ENCODE measurements at regions of chr7 and their contacts with region 1.

Region 1: GRCh38 chr7:87312215-87312865 is 33.1 kb upstream of the CROT start:
- DNase-seq: peak; percentile 75
- H3K4me3 ChIP-seq: no peak overlapping the region
- H3K27ac ChIP-seq: no peak overlapping the region
- H3K4me1 ChIP-seq: peaks cover 3% of the 10 kb centered on the region
- H3K27me3 ChIP-seq: no peaks in the 10 kb centered on the region
- CTCF ChIP-seq: peak; percentile 92 to 93
- POLR2A ChIP-seq: no peak

Region 2: DNA sequence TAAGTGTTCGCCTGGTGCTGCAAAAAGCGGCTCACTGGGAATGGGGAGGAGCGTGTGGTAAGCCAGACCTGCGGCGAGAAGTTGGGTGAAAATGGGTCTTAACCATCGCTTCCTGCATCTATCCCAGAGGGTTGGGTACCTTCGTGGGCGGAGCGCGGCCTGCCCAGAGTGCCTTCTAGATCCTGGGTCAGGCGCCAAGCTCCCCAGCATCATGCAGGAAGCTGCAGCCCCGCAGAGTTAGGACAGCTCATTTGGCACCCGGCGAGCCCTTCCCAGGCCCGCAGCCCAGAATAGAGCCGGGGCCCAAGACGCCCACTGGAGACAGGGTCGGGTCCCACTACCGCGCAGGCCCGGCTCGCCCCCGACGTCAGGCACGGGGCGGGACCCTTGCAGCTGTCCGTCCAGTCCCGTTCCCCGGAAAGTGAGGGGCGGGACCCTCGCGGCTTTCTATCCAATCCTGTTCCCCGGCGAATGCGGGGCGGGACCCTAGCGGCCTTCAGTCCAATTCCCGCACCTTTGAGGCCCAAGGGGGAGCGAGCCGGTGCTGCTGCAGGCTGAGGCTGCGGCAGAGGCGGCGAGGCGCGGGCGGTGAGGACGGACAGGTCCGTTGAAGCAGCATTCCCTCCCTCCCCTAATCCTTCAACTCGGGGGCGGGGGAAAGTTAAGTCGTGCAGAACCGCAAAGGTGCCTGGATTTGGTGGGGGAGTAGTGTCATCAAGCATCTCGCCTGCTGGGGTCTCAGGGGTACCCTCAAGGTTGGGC is 33.0 kb after region 1 on chr7 and contains the start of gene CROT:
- CTCF ChIA-PET with region 1: interaction called, 3 read pairs
- POLR2A ChIA-PET with region 1: no interaction called
- dilution Hi-C with region 1: no loop called
- intact Hi-C with region 1: loop called (anchors 1 kb)
- DNase-seq: peak; percentile 97
- H3K4me3 ChIP-seq: peak within 1 kb of the TSS; percentile 49 to 75 (median 67)
- H3K27ac ChIP-seq: peak within 1 kb of the TSS; percentile 4
- H3K4me1 ChIP-seq: peaks cover 6% of the 10 kb centered on the region
- H3K27me3 ChIP-seq: no peaks in the 10 kb centered on the region
- CTCF ChIP-seq: peak in 1 of 2 donors; percentile 10
- POLR2A ChIP-seq: peak; percentile 83
- total RNA-seq, gene CROT: 5.7 and 6.6 TPM in 2 replicates

Region 3: DNA sequence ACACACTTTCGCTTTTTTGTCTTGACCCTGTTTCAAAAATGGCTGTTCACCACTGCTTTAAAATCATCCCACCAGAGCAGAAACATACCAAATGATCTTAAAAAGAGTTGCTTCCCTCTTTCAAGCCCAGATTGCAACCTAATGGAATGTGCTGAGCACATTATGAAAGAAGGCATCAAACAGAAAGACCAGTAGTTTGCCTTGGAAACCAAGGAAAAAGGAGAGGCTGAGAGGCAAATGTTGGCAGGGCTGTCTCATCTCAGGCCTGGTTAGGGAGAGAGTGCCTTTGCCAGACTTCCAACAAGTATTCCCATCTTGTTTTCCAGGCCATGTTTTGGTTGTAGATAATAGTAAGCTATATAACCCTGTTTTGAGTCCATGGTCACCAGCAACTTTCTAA is 98.8 kb after region 1 on chr7:
- CTCF ChIA-PET with region 1: interaction called, 299 read pairs
- POLR2A ChIA-PET with region 1: no interaction called
- dilution Hi-C with region 1: loop called (anchors 25 kb)
- intact Hi-C with region 1: loop called (anchors 1 kb)
- DNase-seq: no peak
- H3K4me3 ChIP-seq: no peak overlapping the region
- H3K27ac ChIP-seq: no peak overlapping the region
- H3K4me1 ChIP-seq: no peaks in the 10 kb centered on the region
- H3K27me3 ChIP-seq: peaks cover 14% of the 10 kb centered on the region in 2 experiments
- CTCF ChIP-seq: no peak
- POLR2A ChIP-seq: no peak

Region 4: DNA sequence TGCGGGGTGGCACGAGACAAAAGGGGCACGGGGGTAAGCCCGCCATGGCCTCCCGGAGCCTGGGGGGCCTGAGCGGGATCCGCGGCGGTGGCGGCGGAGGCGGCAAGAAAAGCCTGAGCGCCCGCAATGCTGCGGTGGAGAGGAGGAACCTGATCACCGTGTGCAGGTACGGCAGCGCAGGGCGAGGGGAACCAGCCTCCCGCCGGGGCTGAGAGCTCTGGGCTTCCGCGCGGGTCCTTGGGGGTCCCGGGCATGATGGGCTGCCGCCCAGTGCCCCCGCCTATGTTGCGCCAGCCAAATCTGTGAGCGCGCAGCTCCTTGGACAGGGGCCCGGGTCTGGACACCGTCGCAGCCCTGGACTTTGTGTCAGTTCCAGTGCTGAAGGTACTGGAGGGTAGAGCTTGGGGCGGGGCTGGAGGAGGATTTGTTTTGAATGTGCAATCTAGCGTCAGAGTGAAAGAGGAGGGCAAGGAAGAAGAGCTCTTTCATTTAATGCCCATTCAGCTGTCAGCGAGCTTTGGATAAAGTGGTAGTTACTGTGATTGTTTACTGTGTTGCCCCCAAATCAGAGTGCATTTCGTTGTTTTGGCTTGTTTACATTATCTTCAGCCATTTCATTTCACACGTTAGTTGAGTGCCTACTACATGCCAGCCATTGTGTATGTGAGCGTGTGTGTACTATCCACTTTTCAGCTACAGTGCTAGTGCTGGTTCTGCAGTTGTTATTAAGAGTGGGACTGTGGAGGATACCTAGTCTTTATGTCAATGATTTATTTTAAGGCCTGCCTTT is 316.6 kb after region 1 on chr7:
- CTCF ChIA-PET with region 1: no interaction called
- POLR2A ChIA-PET with region 1: no interaction called
- dilution Hi-C with region 1: no loop called
- intact Hi-C with region 1: loop called (anchors 5 kb)
- DNase-seq: peak; percentile 13
- H3K4me3 ChIP-seq: peak overlapping the region; percentile 44 to 53 (median 49)
- H3K27ac ChIP-seq: no peak overlapping the region
- H3K4me1 ChIP-seq: peaks cover 4% of the 10 kb centered on the region
- H3K27me3 ChIP-seq: peaks cover 0 to 2% of the 10 kb centered on the region in 2 experiments
- CTCF ChIP-seq: no peak
- POLR2A ChIP-seq: no peak

Region 5: GRCh38 chr7:87645446-87645845 is 333.1 kb after region 1 on chr7:
- CTCF ChIA-PET with region 1: no interaction called
- POLR2A ChIA-PET with region 1: no interaction called
- dilution Hi-C with region 1: no loop called
- intact Hi-C with region 1: no loop called
- DNase-seq: peak; percentile 30
- H3K4me3 ChIP-seq: no peak overlapping the region
- H3K27ac ChIP-seq: peak overlapping the region; percentile 45
- H3K4me1 ChIP-seq: peaks cover 22% of the 10 kb centered on the region
- H3K27me3 ChIP-seq: no peaks in the 10 kb centered on the region
- CTCF ChIP-seq: no peak
- POLR2A ChIP-seq: no peak

Region 6: DNA sequence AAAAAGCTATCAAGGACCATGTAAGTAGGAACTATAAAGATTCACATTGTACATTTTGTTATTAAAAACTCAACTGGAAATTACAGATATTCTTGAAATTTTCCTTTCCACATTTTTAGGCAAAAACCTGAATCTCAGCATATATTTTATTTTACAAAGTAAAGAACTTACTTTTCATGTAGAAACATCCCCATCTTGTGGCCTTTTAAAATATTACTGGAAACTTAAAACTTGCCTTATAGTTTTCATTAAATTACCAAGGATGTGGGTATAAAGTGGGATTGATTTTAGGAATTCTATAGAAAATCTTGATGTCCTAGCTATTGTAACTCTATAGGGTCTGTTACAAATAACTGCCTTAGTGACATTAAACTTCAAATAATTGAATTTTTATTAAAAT is 574.5 kb after region 1 on chr7:
- CTCF ChIA-PET with region 1: interaction called, 4 read pairs
- POLR2A ChIA-PET with region 1: no interaction called
- dilution Hi-C with region 1: no loop called
- intact Hi-C with region 1: loop called (anchors 1 kb)
- DNase-seq: peak; percentile 56
- H3K4me3 ChIP-seq: no peak overlapping the region
- H3K27ac ChIP-seq: no peak overlapping the region
- H3K4me1 ChIP-seq: no peaks in the 10 kb centered on the region
- H3K27me3 ChIP-seq: no peaks in the 10 kb centered on the region
- CTCF ChIP-seq: peak; percentile 3 to 9
- POLR2A ChIP-seq: no peak

Region 7: GRCh38 chr7:88111136-88111743 is 798.9 kb after region 1 on chr7:
- CTCF ChIA-PET with region 1: interaction called, 3 read pairs
- POLR2A ChIA-PET with region 1: no interaction called
- dilution Hi-C with region 1: no loop called
- intact Hi-C with region 1: loop called (anchors 1 kb)
- DNase-seq: peak; percentile 65
- H3K4me3 ChIP-seq: no peak overlapping the region
- H3K27ac ChIP-seq: no peak overlapping the region
- H3K4me1 ChIP-seq: no peaks in the 10 kb centered on the region
- H3K27me3 ChIP-seq: no peaks in the 10 kb centered on the region
- CTCF ChIP-seq: peak; percentile 32 to 36
- POLR2A ChIP-seq: no peak

Region 8: DNA sequence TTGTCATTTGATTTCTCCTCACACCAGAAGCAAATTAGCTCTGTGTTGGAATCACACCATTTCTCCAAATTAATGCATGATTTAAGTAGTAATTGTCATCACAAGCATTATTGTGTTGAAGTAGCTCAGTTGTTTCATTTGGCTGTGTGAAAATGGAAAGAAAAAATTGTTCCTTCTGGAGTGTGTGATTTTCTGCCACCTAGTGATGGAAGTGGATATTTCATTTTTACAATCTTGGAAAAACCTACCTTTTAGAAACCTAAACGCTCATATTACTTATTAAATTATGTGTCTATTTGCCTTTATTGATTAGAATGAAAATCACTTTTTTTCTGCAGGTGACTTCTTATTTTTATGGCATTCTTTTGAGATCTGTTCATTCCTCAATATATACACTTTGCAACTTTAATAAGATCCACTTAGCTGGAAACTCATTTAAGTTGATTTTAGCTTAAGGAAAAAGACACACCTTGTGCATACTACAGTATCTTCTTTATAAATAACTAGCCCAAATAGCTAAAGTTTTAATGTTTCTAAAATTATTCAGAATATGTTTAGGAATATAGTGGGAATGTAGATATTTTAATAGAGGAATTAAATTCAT is 857.5 kb after region 1 on chr7:
- CTCF ChIA-PET with region 1: no interaction called
- POLR2A ChIA-PET with region 1: no interaction called
- dilution Hi-C with region 1: no loop called
- intact Hi-C with region 1: loop called (anchors 1 kb)
- DNase-seq: peak; percentile 40
- H3K4me3 ChIP-seq: no peak overlapping the region
- H3K27ac ChIP-seq: no peak overlapping the region
- H3K4me1 ChIP-seq: no peaks in the 10 kb centered on the region
- H3K27me3 ChIP-seq: no peaks in the 10 kb centered on the region
- CTCF ChIP-seq: peak; percentile 17 to 33
- POLR2A ChIP-seq: no peak

Measured in endothelial cell of umbilical vein (primary cell).